ENCODE measurements at regions of chr22 and their contacts with region 1.

Region 1: DNA sequence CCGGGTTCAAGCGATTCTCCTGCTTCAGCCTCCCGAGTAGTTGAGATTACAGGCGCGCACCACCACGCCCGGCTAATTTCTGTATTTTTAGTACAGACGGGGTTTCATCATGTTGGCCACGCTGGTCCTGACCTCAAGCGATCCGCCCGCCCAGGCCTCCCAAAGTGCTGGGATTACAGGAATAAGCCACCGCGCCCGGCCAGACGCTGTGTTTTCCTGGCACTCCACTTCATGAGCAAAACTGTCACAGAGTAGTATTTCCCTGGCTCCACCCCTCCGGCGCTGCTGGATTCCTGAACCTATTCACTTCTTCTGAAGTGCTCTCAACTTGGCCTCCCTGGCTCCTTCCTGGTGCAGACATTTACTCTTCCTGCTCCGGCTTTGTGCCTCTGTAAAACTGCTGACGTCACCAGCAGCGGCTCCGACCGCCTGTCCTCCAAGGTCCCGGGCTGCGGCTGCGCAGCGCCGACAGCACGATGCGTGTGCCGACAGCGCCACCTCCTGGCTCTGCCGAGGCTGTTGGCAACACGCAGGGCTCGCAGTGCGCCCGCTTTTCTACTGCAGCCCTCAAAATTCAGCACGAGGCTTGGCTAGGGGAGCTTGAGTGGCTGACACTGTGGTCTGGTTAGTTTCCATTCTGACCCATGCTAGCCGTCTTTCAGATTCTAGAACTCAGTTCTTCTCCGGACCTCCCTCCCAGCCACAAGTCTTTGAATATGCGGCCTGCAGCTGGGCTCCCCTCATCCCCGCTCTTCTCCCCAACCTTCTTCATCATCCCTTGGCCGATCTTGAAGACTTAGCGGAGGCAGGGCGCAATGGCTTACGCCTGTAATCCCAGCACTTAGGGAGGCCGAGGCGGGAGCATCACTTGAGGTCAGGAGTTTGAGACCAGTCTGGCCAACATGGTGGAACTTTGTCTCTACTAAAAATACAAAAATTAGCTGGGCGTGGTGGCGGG is 36.6 kb downstream of the APOL3 start:
- DNase-seq: peak; percentile 82 to 92 (median 90)
- H3K4me3 ChIP-seq: peak overlapping the region; percentile 5 to 74 (median 53)
- H3K27ac ChIP-seq: peak overlapping the region in 55 of 59 donors; percentile 4 to 91 (median 75)
- H3K27me3 ChIP-seq: peaks cover 0 to 4% (median 0%) of the 10 kb centered on the region in 45 donors
- CTCF ChIP-seq: peak; percentile 89 to 100 (median 99)

Region 2: DNA sequence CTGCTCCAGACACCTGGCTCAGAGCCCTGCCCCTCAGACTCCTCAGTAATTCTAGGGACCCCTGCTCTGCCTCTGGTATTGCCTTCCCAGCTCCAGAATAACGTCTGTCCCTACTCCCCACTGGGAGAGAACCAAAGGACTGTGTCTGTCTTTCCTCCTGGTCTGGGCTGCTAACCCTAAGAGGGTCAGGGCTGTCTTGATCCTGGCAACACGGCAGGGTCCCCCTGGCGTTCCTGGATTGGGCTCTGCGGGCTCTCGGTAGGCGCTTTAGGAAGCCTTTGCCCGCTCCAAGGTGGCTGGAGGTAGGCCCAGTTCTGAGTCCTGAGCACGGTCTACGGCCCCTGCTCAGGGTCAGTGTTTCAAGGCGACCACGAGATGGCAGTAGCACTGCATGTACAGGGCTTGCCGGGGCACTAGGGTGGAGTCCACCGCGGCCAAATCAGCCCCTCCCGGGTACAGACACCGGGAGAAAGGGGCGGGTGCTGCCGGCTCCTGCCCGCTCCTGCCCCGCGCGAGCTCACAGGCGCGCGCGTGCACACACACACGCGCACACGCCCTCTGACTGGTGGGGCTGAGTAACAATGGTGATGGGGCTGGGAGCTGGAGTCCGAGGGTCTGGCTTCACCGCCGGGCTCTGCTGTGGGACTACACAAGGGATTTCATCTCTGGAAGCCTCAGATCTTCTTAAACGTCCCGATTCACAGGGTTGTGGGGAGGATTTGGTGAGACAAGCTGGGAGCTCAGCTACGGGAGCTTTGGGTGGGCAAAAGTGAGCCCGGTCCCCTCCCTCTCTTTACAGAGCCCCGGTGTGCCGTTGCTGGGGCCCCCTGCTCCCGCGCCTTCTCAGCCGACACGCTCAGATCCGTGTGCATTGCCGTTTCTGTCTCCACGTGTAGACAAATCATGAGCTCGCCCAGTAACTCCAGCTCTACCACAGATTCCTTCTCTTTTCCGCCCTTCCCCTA is 773.1 kb before region 1 on chr22:
- intact Hi-C with region 1: loop called in 1 of 2 experiments (anchors 5 kb)
- DNase-seq: peak; percentile 67 to 94 (median 89)
- H3K4me3 ChIP-seq: peak overlapping the region; percentile 31 to 76 (median 61)
- H3K27ac ChIP-seq: peak overlapping the region in 55 of 59 donors; percentile 1 to 91 (median 64)
- H3K27me3 ChIP-seq: no peaks in the 10 kb centered on the region
- CTCF ChIP-seq: peak; percentile 82 to 97 (median 92)

Region 3: GRCh38 chr22:35430897-35431322 is 693.0 kb before region 1 on chr22:
- intact Hi-C with region 1: loop called in 1 of 2 experiments (anchors 10 kb)
- DNase-seq: peak; percentile 74 to 91 (median 82)
- H3K4me3 ChIP-seq: no peak overlapping the region
- H3K27ac ChIP-seq: peak overlapping the region in 21 of 59 donors; percentile 4 to 57 (median 33)
- H3K27me3 ChIP-seq: no peaks in the 10 kb centered on the region
- CTCF ChIP-seq: peak; percentile 80 to 98 (median 96)

Region 4: DNA sequence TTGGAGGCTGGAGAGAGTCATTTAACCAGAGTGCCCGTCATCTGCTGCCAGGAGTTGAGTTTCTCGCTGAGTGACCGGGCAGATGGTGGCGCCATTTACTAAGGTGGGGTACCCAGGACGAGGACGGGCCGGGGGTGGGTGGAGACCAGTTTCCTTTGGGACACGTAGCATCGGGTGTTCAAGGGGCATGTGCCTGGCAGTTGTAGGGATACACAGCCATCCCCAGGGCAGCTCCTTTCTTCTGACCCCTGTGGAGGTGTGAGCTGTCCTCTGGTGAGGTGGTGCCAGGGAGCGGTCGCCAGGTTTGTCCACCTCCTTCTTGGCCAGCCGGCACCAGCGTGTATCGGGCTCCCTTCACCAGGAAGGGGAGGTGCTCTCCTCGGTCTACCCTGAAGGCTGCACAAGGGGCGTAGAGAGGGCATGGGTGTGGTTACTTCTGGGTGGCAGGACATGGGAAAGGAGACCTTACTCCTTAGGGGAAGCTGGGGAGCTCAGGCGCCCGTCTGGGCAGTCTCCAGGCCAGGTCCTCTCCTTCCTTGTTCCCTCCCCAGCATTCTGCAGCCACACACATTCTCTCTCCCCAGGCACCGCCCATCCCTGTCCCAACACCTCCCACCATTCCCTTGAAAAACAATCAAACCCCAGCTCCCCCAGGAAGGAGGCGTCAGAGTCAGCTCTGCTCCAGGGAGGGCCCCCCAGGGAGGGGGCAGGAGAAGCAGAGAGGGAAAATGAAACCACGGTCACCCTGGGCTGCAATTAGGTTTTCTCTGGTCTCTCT is 496.5 kb before region 1 on chr22:
- intact Hi-C with region 1: loop called (anchors 5 to 10 kb)
- DNase-seq: peak in 9 of 10 donors; percentile 23 to 72 (median 59)
- H3K4me3 ChIP-seq: peak overlapping the region; percentile 16 to 71 (median 53)
- H3K27ac ChIP-seq: peak overlapping the region in 14 of 59 donors; percentile 11 to 72 (median 48)
- H3K27me3 ChIP-seq: peaks cover 0 to 6% (median 0%) of the 10 kb centered on the region in 45 donors
- CTCF ChIP-seq: peak in 53 of 56 donors; percentile 20 to 67 (median 45)

Region 5: DNA sequence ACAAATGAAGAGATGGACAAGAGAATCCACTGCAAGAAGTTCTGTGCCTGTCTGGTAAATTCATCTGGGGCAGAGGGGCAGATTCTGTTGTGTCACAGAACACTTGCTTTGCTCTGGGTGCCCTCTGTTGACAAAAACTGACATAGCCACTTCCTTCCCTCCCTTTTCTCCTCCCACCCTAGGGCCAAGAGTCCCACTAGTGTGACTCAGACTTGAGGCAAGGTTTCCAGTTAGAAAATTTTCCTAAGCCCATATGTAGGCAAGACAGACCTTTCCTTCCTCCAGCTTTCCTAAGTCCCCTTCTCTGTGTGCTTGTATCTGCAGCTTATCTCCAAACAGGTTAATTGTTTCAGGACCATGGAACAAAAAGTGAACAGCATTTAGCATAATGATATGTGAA is 202.2 kb before region 1 on chr22:
- intact Hi-C with region 1: loop called in 1 of 2 experiments (anchors 2 kb)
- DNase-seq: peak in 4 of 10 donors; percentile 23 to 49 (median 40)
- H3K4me3 ChIP-seq: no peak overlapping the region
- H3K27ac ChIP-seq: peak overlapping the region in 7 of 59 donors; percentile 5 to 31 (median 19)
- H3K27me3 ChIP-seq: no peaks in the 10 kb centered on the region
- CTCF ChIP-seq: peak in 54 of 56 donors; percentile 32 to 80 (median 62)

Region 6: DNA sequence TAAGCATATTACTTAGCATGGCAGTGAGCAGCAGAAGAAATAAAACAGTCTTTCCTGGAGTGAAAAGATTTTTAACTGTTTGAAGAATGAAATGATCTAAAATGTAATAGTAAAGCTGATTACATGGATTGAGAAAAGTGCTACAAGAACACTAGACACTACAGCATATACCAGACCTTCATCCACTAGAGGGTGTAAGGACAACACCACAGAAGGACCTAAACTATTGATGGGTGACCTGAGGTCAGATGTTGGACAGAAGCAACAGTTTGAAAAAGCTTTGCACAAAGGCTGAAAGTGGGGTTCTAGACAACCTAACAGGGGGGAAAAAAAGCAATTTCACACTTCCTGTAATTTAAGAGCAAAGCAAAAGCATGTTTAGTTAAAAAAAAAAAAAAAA is 193.0 kb before region 1 on chr22:
- intact Hi-C with region 1: loop called in 1 of 2 experiments (anchors 2 kb)
- DNase-seq: no peak
- H3K4me3 ChIP-seq: no peak overlapping the region
- H3K27ac ChIP-seq: peak overlapping the region in 1 of 59 donors; percentile 2
- H3K27me3 ChIP-seq: no peaks in the 10 kb centered on the region
- CTCF ChIP-seq: peak in 55 of 56 donors; percentile 46 to 84 (median 70)

Region 7: GRCh38 chr22:36065775-36066559 is 58.0 kb before region 1 on chr22:
- intact Hi-C with region 1: loop called (anchors 5 kb)
- DNase-seq: peak; percentile 80 to 89 (median 86)
- H3K4me3 ChIP-seq: peak overlapping the region; percentile 44 to 89 (median 62)
- H3K27ac ChIP-seq: peak overlapping the region; percentile 7 to 94 (median 83)
- H3K27me3 ChIP-seq: no peaks in the 10 kb centered on the region
- CTCF ChIP-seq: peak; percentile 94 to 100 (median 99)

Measured in dorsolateral prefrontal cortex (tissue), 120 donors.